ENCODE measurements at regions of chr22 and their contacts with region 1.

Region 1: DNA sequence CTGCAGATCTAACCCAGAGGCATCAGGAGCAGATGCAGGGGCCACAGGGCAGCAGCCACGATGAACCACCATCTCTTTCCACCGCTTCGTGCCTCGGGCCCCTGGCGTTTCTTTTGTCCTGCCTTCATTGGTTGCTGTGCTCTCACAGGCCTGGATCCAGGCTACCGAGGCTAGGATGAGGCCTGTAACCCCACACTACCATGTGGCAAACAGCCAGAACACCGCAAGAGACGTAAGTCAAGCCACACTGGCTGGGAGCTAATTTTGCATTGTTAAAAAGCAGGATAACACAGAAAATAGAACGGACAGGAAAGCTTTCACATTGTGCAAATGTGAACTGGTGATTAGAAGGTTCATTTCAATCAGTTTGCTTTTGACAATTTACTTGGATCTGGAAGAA is 15.7 kb upstream of the ARFGAP3 start:
- DNase-seq: no peak
- H3K4me3 ChIP-seq: no peak overlapping the region
- H3K27ac ChIP-seq: no peak overlapping the region
- H3K4me1 ChIP-seq: peaks cover 11 to 20% (median 12%) of the 10 kb centered on the region in 3 donors
- H3K27me3 ChIP-seq: no peaks in the 10 kb centered on the region
- CTCF ChIP-seq: no peak
- POLR2A ChIP-seq: no peak

Region 2: GRCh38 chr22:42906605-42907348 is 34.0 kb after region 1 on chr22:
- intact Hi-C with region 1: no loop called
- DNase-seq: no peak
- H3K4me3 ChIP-seq: no peak overlapping the region
- H3K27ac ChIP-seq: peak overlapping the region in 3 of 4 donors; percentile 71 to 83 (median 78)
- H3K4me1 ChIP-seq: peaks cover 24 to 78% (median 38%) of the 10 kb centered on the region in 3 donors
- H3K27me3 ChIP-seq: no peaks in the 10 kb centered on the region
- CTCF ChIP-seq: no peak
- POLR2A ChIP-seq: no peak

Region 3: GRCh38 chr22:43088979-43089717 is 216.3 kb after region 1 on chr22 and contains the start of gene TTLL1:
- intact Hi-C with region 1: loop called (anchors 5 kb)
- DNase-seq: peak; percentile 44
- H3K4me3 ChIP-seq: peak within 1 kb of the TSS; percentile 64 to 87 (median 76)
- H3K27ac ChIP-seq: peak within 1 kb of the TSS; percentile 78 to 84 (median 80)
- H3K4me1 ChIP-seq: peaks cover 6 to 40% (median 17%) of the 10 kb centered on the region in 3 donors
- H3K27me3 ChIP-seq: no peaks in the 10 kb centered on the region
- CTCF ChIP-seq: peak in 3 of 6 experiments; percentile 14 to 39 (median 31)
- POLR2A ChIP-seq: peak in 2 of 4 donors; percentile 6 to 52
- total RNA-seq, gene TTLL1: 1.8 to 7.2 (median 3.4) TPM

Measured in esophagus squamous epithelium (tissue), 5 donors.